Left cardiac atrium (tissue), 4 donors: ENCODE measurements at regions of chr6 and their contacts with region 1.

Region 1: GRCh38 chr6:128520436-128521281 is at the start of gene PTPRK:
- DNase-seq: peak; percentile 95
- ATAC-seq: peak; percentile 95 to 96
- total RNA-seq, gene PTPRK: 29.6 to 30.2 TPM

Region 2: GRCh38 chr6:128068116-128068479 is 452.6 kb before region 1 on chr6:
- intact Hi-C with region 1: loop called in 1 of 2 experiments (anchors 5 kb)
- DNase-seq: peak; percentile 34
- ATAC-seq: peak; percentile 90 to 92

Region 3: DNA sequence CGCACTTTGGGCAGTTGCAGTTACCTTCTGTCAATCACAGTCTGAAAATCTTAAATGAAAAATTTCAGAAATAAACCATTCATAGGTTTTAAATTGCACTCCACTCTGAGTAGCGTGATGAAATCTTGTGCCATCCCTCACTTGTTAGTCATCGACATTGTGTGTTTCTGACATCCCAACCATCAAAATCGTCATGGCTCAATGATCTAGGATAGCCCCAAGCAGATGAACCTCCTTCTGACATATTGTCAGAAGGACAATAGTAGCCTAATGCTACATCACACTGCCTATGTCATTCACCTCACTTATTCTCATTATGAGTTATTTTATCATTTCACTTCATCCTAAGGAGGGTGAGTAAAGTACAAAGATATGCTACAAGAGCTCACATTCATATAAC is 285.1 kb before region 1 on chr6:
- intact Hi-C with region 1: loop called in 1 of 2 experiments (anchors 10 kb)
- DNase-seq: no peak
- ATAC-seq: no peak

Region 4: GRCh38 chr6:128339635-128340450 is 180.8 kb before region 1 on chr6:
- intact Hi-C with region 1: loop called in 1 of 2 experiments (anchors 10 kb)
- DNase-seq: no peak
- ATAC-seq: no peak

Region 5: GRCh38 chr6:128379577-128379976 is 141.1 kb before region 1 on chr6:
- intact Hi-C with region 1: no loop called
- DNase-seq: no peak
- ATAC-seq: peak in 1 of 2 donors; percentile 57

Region 6: GRCh38 chr6:128725271-128726233 is 204.9 kb after region 1 on chr6:
- intact Hi-C with region 1: loop called in 1 of 2 experiments (anchors 10 kb)
- DNase-seq: no peak
- ATAC-seq: no peak